Psoas muscle (tissue), 8 donors: ENCODE measurements at regions of chr12 and their contacts with region 1.

Region 1: DNA sequence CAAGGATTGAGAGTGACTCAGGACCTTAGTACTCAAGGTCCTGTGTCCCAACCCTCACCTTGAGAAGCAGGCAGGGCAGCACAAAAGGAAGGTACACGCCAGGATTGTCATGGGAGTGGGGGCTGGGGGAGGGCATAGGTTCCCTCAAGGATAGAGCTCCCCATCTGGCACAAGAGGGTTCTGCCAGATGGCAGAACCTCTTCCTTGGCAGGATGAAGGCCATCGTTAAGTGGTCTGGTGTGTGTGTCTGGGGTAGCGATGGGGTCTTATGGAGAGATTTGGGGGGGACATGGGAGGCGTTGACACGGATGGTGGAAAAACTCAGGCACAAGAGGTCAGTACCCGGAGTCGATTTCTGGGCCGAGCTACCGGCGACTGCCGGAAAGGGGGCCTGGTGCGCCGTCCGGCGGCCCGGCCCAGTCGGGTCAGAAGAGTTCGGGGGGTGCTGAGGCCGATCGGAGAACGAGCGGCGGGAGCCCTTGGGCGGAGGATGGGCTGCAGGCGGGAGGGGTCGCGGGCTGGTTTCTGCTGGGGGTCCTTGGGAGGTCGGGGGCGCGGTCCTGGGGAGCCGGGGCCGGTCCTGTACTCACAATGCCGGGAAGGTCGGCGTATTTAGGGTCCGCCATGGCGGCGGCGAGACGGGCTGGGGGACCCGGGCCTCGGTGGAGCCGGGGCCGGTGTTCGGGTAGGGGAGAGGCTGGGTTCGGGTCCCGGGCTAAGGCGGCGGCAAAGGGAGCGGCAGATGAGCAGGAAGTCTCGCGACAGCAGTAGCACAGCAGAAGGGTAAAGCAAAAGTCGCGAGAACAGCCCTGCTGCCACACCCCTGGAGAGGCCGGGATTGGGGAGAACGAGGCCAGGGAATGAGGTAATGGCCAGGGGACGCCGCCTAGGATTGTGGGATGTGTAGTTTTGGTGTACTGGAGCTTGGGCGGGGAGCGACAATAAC is at the start of gene DCTN2:
- DNase-seq: peak; percentile 95 to 97
- ATAC-seq: peak; percentile 95 to 99 (median 98)
- H3K4me3 ChIP-seq: peak within 1 kb of the TSS; percentile 97
- H3K27ac ChIP-seq: peak within 1 kb of the TSS; percentile 86
- H3K4me1 ChIP-seq: peaks cover 20% of the 10 kb centered on the region
- H3K27me3 ChIP-seq: peaks cover 0 to 29% (median 7%) of the 10 kb centered on the region in 3 donors
- CTCF ChIP-seq: no peak
- total RNA-seq, gene DCTN2: 91.0 to 128 (median 103) TPM

Region 2: DNA sequence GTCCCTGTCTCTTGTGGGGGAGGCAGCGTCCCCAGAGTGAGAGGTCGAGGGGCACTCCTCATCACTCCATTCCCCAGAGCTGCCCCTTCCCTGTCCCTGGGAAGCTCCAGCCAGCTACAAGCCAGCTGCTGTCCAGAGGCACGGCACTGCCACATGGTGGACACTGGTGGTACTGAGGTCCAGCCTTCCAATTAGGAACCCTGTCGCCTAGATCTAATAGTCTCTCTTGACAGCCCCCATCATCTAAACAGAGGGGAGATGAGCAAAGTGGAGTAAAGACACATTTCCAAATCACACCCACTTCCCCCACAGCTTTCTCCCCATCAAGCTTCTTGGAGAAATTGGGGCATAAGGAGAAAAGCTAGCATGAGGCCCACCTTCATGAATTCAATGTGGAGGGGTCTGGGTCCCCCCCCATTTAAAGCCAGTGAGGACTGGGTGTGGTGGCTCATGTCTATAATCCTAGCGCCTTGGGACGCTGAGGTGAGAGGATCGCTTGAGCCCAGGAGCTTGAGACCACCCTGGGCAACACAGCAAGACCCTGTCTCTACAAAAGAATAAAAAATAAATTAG is 93.7 kb before region 1 on chr12:
- intact Hi-C with region 1: no loop called
- DNase-seq: peak; percentile 80 to 90
- ATAC-seq: peak; percentile 71 to 87 (median 81)
- H3K4me3 ChIP-seq: peak overlapping the region; percentile 39
- H3K27ac ChIP-seq: peak overlapping the region; percentile 87
- H3K4me1 ChIP-seq: peaks cover 35% of the 10 kb centered on the region
- H3K27me3 ChIP-seq: no peaks in the 10 kb centered on the region
- CTCF ChIP-seq: peak; percentile 90

Region 3: GRCh38 chr12:57693659-57694458 is 147.1 kb after region 1 on chr12 and contains the start of gene OS9:
- intact Hi-C with region 1: loop called in 1 of 2 experiments (anchors 5 kb)
- DNase-seq: peak; percentile 91 to 95
- ATAC-seq: peak; percentile 98 to 99 (median 98)
- H3K4me3 ChIP-seq: peak within 1 kb of the TSS; percentile 89
- H3K27ac ChIP-seq: peak within 1 kb of the TSS; percentile 88
- H3K4me1 ChIP-seq: peaks cover 10% of the 10 kb centered on the region
- H3K27me3 ChIP-seq: peaks cover 0 to 6% (median 0%) of the 10 kb centered on the region in 3 donors
- CTCF ChIP-seq: peak; percentile 80
- total RNA-seq, gene OS9: 56.6 to 64.4 (median 61.5) TPM